ENCODE measurements at regions of chr3 and their contacts with region 1.

Region 1: GRCh38 chr3:101685870-101686412 is 577 bp downstream of the RPL24 start:
- DNase-seq: no peak
- H3K4me3 ChIP-seq: peak overlapping the region; percentile 79
- H3K4me3 Mint-ChIP-seq: peak overlapping the region; percentile 89
- H3K27ac Mint-ChIP-seq: peak overlapping the region; percentile 98
- H3K4me1 ChIP-seq: peaks cover 4% of the 10 kb centered on the region; the same call in 1 of the 2 replicates
- H3K4me1 Mint-ChIP-seq: peaks cover 14% of the 10 kb centered on the region
- H3K27me3 ChIP-seq: no peaks in the 10 kb centered on the region
- H3K27me3 Mint-ChIP-seq: no peaks in the 10 kb centered on the region
- CTCF ChIP-seq: no peak

Region 2: GRCh38 chr3:101561630-101562328 is 124.2 kb before region 1 on chr3 and contains the start of gene TRMT10C:
- CTCF ChIA-PET with region 1: no interaction called
- POLR2A ChIA-PET with region 1: no interaction called
- intact Hi-C with region 1: loop called (anchors 1 kb)
- DNase-seq: peak; percentile 91
- H3K4me3 ChIP-seq: peak within 1 kb of the TSS; percentile 91
- H3K4me3 Mint-ChIP-seq: peak within 1 kb of the TSS; percentile 83
- H3K27ac Mint-ChIP-seq: peak within 1 kb of the TSS; percentile 87
- H3K4me1 ChIP-seq: no peaks in the 10 kb centered on the region; the same call in 1 of the 2 replicates
- H3K4me1 Mint-ChIP-seq: no peaks in the 10 kb centered on the region
- H3K27me3 ChIP-seq: no peaks in the 10 kb centered on the region
- H3K27me3 Mint-ChIP-seq: no peaks in the 10 kb centered on the region
- CTCF ChIP-seq: no peak
- total RNA-seq, gene TRMT10C: 25.7 and 28.1 TPM in 2 replicates

Region 3: DNA sequence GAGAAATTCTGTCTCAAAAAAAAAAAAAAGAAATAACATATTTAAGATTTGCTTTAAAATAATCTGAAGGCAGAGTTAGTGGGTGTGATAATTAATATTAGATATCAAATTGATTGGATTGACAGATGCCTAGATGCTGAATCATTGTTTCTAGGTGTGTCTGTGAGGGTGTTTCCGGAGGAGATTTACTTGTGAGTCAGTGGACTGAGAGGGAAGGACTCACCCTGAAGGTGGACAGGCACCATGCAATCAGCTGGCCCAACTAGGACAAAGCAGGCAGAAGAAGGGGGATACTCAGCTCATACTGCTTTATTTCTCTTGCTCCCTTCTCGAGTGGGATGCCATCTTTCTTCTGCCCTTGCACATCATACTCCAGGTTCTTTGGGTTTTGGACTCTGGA is 17.2 kb after region 1 on chr3:
- CTCF ChIA-PET with region 1: no interaction called
- POLR2A ChIA-PET with region 1: no interaction called
- intact Hi-C with region 1: no loop called
- DNase-seq: no peak
- H3K4me3 ChIP-seq: no peak overlapping the region
- H3K4me3 Mint-ChIP-seq: no peak overlapping the region
- H3K27ac Mint-ChIP-seq: no peak overlapping the region
- H3K4me1 ChIP-seq: peaks cover 10% of the 10 kb centered on the region
- H3K4me1 Mint-ChIP-seq: no peaks in the 10 kb centered on the region
- H3K27me3 ChIP-seq: no peaks in the 10 kb centered on the region
- H3K27me3 Mint-ChIP-seq: no peaks in the 10 kb centered on the region
- CTCF ChIP-seq: no peak

Region 4: GRCh38 chr3:101724329-101725193 is 38.6 kb after region 1 on chr3 and contains the start of gene CEP97:
- CTCF ChIA-PET with region 1: interaction called, 3 read pairs
- POLR2A ChIA-PET with region 1: interaction called, 8 read pairs
- intact Hi-C with region 1: loop called (anchors 2 kb)
- DNase-seq: peak; percentile 89 to 90
- H3K4me3 ChIP-seq: peak within 1 kb of the TSS; percentile 55
- H3K4me3 Mint-ChIP-seq: peak within 1 kb of the TSS; percentile 96
- H3K27ac Mint-ChIP-seq: peak within 1 kb of the TSS; percentile 83
- H3K4me1 ChIP-seq: no peaks in the 10 kb centered on the region
- H3K4me1 Mint-ChIP-seq: no peaks in the 10 kb centered on the region
- H3K27me3 ChIP-seq: no peaks in the 10 kb centered on the region
- H3K27me3 Mint-ChIP-seq: no peaks in the 10 kb centered on the region
- CTCF ChIP-seq: no peak
- total RNA-seq, gene CEP97: 4.3 and 4.5 TPM in 2 replicates

Region 5: GRCh38 chr3:101849051-101849720 is 163.2 kb after region 1 on chr3 and contains the start of gene NFKBIZ:
- CTCF ChIA-PET with region 1: no interaction called
- POLR2A ChIA-PET with region 1: interaction called, 3 read pairs
- intact Hi-C with region 1: loop called (anchors 5 kb)
- DNase-seq: peak; percentile 95 to 96
- H3K4me3 ChIP-seq: peak within 1 kb of the TSS; percentile 96
- H3K4me3 Mint-ChIP-seq: peak within 1 kb of the TSS; percentile 65
- H3K27ac Mint-ChIP-seq: peak within 1 kb of the TSS; percentile 61
- H3K4me1 ChIP-seq: peaks cover 54% of the 10 kb centered on the region
- H3K4me1 Mint-ChIP-seq: peaks cover 34% of the 10 kb centered on the region
- H3K27me3 ChIP-seq: no peaks in the 10 kb centered on the region
- H3K27me3 Mint-ChIP-seq: no peaks in the 10 kb centered on the region
- CTCF ChIP-seq: no peak
- total RNA-seq, gene NFKBIZ: 20.2 and 24.5 TPM in 2 replicates